ENCODE measurements at regions of chr1 and their contacts with region 1.

Region 1: DNA sequence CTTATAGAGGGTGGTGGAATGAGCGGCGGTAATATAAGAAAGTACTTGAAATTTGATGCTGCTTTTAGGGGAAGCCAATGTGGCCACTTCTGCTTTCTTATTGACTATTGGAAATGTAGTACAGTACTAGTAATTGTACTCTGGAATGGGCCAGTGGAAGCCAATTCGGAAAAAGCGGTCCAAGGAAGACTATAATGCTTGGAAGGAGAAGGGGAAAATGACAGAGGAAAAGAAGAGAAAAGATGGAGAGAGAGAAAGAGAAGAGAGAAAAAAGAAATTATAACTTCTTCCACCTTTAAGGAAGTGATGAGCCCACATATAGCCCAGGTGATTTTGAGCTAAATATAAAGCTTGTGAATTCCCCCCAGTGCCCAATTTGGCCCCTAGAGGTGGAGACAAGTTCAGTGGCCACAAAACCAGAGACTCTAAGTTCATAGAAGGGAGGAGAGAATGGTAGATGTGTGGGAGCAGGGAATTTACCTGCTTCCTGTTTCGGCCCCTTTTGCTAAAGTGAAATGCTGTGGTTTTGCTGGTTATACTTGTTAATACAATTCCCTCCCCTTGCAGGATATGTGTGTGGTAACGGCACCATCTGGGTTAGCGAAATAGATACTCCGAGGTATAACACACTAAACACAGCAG is 35.7 kb upstream of the DUSP10 start:
- DNase-seq: peak; percentile 79
- H3K4me3 Mint-ChIP-seq: peak overlapping the region; percentile 49
- H3K27ac Mint-ChIP-seq: peak overlapping the region; percentile 89
- H3K4me1 Mint-ChIP-seq: peaks cover 74% of the 10 kb centered on the region
- H3K27me3 Mint-ChIP-seq: no peaks in the 10 kb centered on the region

Region 2: GRCh38 chr1:221708987-221709386 is 68.6 kb before region 1 on chr1:
- CTCF ChIA-PET with region 1: no interaction called
- intact Hi-C with region 1: loop called (anchors 1 kb)
- DNase-seq: peak; percentile 42
- H3K4me3 Mint-ChIP-seq: no peak overlapping the region
- H3K27ac Mint-ChIP-seq: no peak overlapping the region
- H3K4me1 Mint-ChIP-seq: peaks cover 53% of the 10 kb centered on the region
- H3K27me3 Mint-ChIP-seq: no peaks in the 10 kb centered on the region

Region 3: DNA sequence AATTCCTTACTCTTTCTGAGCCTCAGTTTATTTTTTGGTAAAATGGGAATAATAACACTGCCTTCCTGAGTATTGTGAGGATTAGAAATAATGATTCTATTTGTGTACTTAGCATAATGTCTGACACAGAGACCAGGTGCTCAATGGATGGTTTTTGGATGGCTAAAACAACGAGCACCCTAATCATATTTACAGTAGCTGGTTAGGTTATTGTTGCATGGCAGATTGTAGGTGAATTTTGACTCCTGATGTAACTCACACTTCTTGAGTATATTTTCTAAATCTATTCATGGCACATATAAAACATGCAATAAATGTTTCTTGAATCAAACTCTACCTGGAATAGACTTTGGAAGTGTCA is 23.7 kb before region 1 on chr1:
- CTCF ChIA-PET with region 1: interaction called, 3 read pairs
- intact Hi-C with region 1: loop called (anchors 1 kb)
- DNase-seq: no peak
- H3K4me3 Mint-ChIP-seq: no peak overlapping the region
- H3K27ac Mint-ChIP-seq: peak overlapping the region; percentile 82
- H3K4me1 Mint-ChIP-seq: peaks cover 37% of the 10 kb centered on the region
- H3K27me3 Mint-ChIP-seq: peaks cover 2% of the 10 kb centered on the region

Region 4: GRCh38 chr1:221801773-221802516 is 24.4 kb after region 1 on chr1:
- CTCF ChIA-PET with region 1: no interaction called
- intact Hi-C with region 1: loop called (anchors 1 kb)
- DNase-seq: peak; percentile 34
- H3K4me3 Mint-ChIP-seq: no peak overlapping the region
- H3K27ac Mint-ChIP-seq: no peak overlapping the region
- H3K4me1 Mint-ChIP-seq: peaks cover 28% of the 10 kb centered on the region
- H3K27me3 Mint-ChIP-seq: no peaks in the 10 kb centered on the region

Region 5: DNA sequence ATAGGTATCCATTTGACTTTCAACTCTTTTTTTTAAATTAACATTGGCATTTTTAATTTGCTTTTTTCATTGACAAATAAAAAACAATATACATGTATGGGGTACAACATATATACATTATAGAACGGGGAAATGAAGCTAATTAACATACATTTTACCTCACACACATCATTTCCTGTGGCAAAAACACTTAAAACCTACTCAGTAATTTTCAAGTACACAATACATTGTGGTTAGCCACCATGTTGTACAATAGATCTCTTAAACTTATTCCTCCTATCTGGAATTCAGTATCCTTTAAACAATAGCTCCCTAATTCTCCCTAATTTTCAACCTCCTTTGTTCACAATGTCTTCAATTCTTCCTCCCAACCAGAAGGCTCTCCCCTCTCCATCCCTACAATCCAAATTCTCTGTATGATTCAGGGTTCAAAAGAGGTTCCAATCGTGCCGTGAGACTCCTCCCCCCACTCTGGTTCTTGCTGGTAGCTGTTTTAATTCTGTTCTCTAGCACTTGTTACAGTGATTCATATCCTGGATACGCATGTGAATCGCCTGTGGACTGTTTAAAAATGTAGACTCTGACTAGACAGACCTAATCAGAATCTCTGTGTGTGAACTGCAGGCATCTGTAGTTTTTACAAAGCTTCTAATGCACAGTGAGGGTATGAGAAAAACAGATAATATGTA is 51.9 kb after region 1 on chr1:
- CTCF ChIA-PET with region 1: interaction called, 3 read pairs
- intact Hi-C with region 1: loop called (anchors 1 kb)
- DNase-seq: peak; percentile 83
- H3K4me3 Mint-ChIP-seq: peak overlapping the region; percentile 14
- H3K27ac Mint-ChIP-seq: peak overlapping the region; percentile 83
- H3K4me1 Mint-ChIP-seq: peaks cover 45% of the 10 kb centered on the region
- H3K27me3 Mint-ChIP-seq: no peaks in the 10 kb centered on the region

Region 6: DNA sequence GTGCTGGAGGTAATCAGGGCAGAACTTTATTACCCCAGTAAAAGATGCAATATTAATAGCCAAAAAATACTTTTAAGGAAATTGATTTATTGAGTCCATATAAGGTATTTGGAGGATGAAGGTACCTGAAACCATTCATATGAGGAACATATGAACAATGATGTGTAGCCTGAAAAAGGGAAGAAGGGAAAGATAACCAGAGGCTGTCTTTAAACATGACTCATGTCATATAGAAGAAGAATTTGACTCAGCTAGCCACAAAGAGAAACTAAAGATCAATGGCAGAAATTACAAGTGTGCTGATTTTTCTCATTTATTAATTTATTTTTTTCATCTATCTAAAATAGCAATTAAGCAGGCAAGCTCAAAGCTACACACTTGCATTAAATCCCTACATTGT is 100.6 kb after region 1 on chr1:
- CTCF ChIA-PET with region 1: interaction called, 3 read pairs
- intact Hi-C with region 1: loop called (anchors 1 kb)
- DNase-seq: no peak
- H3K4me3 Mint-ChIP-seq: no peak overlapping the region
- H3K27ac Mint-ChIP-seq: no peak overlapping the region
- H3K4me1 Mint-ChIP-seq: peaks cover 9% of the 10 kb centered on the region
- H3K27me3 Mint-ChIP-seq: peaks cover 11% of the 10 kb centered on the region

Region 7: GRCh38 chr1:221897321-221897721 is 119.8 kb after region 1 on chr1:
- CTCF ChIA-PET with region 1: no interaction called
- intact Hi-C with region 1: no loop called
- DNase-seq: no peak
- H3K4me3 Mint-ChIP-seq: no peak overlapping the region
- H3K27ac Mint-ChIP-seq: no peak overlapping the region
- H3K4me1 Mint-ChIP-seq: no peaks in the 10 kb centered on the region
- H3K27me3 Mint-ChIP-seq: no peaks in the 10 kb centered on the region

Measured in activated naive CD4-positive, alpha-beta T cell treated with anti-CD3 and anti-CD28 coated beads for 36 hours (primary cell).